Heart right ventricle (tissue), 16 donors: ENCODE measurements at regions of chr7 and their contacts with region 1.

Region 1: GRCh38 chr7:116525913-116526861 is 1.4 kb downstream of the CAV1 start:
- DNase-seq: peak; percentile 82 to 88
- ATAC-seq: peak; percentile 78 to 93 (median 87)
- H3K4me3 ChIP-seq: peak overlapping the region; percentile 61 to 96 (median 76)
- H3K27ac ChIP-seq: peak overlapping the region; percentile 90 to 99 (median 96)
- H3K4me1 ChIP-seq: peaks cover 2 to 81% (median 57%) of the 10 kb centered on the region in 9 donors
- H3K27me3 ChIP-seq: peaks cover 0 to 45% (median 0%) of the 10 kb centered on the region in 7 donors
- CTCF ChIP-seq: peak; percentile 79 to 95 (median 90)

Region 2: GRCh38 chr7:116258734-116259133 is 267.5 kb before region 1 on chr7:
- intact Hi-C with region 1: loop called in 8 of 10 experiments (anchors 1 to 5 kb)
- DNase-seq: peak in 1 of 2 donors; percentile 26
- ATAC-seq: peak in 6 of 8 donors; percentile 67 to 79 (median 72)
- H3K4me3 ChIP-seq: no peak overlapping the region
- H3K27ac ChIP-seq: peak overlapping the region in 6 of 10 donors; percentile 0 to 42 (median 28)
- H3K4me1 ChIP-seq: peaks cover 0 to 15% (median 5%) of the 10 kb centered on the region in 9 donors
- H3K27me3 ChIP-seq: no peaks in the 10 kb centered on the region
- CTCF ChIP-seq: peak; percentile 59 to 89 (median 85)

Region 3: DNA sequence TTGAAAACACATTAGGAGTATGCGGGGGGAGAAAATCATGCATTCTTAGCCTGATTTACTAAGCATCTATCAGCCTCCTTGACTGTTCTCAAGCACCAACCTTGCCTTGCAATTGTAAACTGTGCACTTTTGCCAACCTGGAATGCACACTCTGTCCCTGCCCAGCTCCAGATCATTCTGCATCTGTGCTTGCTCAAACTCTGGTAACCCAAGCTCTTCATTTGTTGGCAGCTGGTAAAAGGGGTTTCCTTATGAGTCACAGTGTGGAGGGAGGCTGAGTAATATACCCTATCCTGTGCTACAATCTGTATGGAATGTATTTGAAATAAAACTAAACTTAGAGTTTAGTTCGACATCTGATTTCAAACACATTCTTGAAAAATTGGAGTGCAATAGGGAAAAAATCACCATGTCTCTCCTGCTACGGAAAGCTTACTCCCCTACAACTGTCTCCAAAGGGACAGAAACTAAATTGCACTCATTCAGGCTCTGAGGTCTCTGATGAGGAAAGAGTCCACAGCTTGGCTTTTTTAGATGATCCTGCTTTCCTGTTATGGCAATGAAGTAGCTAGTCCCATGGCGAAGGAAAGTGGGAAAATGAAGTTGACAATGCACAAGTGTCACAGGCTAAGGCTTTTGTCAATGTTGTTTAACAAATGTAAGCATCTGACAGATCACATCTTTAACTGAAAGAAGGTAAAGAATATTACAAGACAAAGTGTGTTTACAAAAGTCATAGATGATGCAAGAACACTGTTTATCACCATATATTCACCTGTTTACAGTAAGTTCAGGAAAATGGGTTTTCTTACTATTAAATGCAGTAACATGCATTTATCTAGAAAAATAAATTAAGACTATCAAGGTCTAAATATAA is 254.0 kb before region 1 on chr7:
- intact Hi-C with region 1: loop called in 2 of 10 experiments (anchors 5 kb)
- DNase-seq: peak in 1 of 2 donors; percentile 59
- ATAC-seq: peak; percentile 83 to 99 (median 94)
- H3K4me3 ChIP-seq: no peak overlapping the region
- H3K27ac ChIP-seq: peak overlapping the region; percentile 19 to 77 (median 62)
- H3K4me1 ChIP-seq: peaks cover 9 to 43% (median 27%) of the 10 kb centered on the region in 9 donors
- H3K27me3 ChIP-seq: no peaks in the 10 kb centered on the region
- CTCF ChIP-seq: no peak

Region 4: DNA sequence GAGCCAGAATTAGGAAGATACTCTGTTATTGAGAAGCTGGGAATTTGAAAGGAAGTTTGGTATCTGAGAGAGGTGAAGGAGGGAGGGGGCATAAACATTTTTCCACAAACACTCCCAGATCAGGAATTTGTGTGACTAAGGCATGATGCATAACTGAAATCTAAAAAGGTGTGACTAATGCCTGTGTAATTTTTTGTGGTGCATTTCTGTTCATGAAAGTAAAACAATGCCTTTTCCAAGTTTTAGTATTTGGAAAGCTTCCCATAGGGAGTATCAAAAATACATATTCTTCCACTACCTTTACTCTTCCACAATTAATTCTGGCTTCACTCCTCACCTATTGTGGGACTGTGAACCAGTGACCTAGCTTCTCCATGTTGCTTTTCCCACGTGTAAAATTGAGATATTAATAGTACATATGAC is 83.1 kb before region 1 on chr7:
- intact Hi-C with region 1: loop called in 4 of 10 experiments (anchors 5 kb)
- DNase-seq: no peak
- ATAC-seq: peak in 3 of 8 donors; percentile 17 to 50 (median 19)
- H3K4me3 ChIP-seq: no peak overlapping the region
- H3K27ac ChIP-seq: peak overlapping the region in 7 of 10 donors; percentile 11 to 79 (median 50)
- H3K4me1 ChIP-seq: peaks cover 7 to 76% (median 36%) of the 10 kb centered on the region in 9 donors
- H3K27me3 ChIP-seq: no peaks in the 10 kb centered on the region
- CTCF ChIP-seq: no peak

Region 5: DNA sequence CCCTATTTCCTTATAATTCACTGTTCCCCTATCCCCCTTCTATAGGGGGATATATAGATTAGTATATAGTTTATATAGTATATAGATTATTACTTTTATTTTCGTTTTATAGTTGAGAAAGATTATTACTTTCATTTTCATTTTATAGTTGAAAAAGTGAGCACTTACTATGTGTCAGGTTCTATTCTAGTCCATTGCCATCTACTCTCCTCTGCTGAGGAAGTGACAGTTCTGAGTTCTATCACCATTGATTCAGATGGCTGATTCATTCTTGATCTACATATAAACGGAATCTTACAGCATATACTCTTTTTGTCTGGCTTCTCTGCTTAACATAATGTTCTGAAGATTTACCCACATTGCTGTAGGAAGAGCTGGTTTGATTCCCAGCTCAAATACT is 47.4 kb before region 1 on chr7:
- intact Hi-C with region 1: no loop called
- DNase-seq: no peak
- ATAC-seq: no peak
- H3K4me3 ChIP-seq: no peak overlapping the region
- H3K27ac ChIP-seq: no peak overlapping the region
- H3K4me1 ChIP-seq: no peaks in the 10 kb centered on the region
- H3K27me3 ChIP-seq: no peaks in the 10 kb centered on the region
- CTCF ChIP-seq: no peak

Region 6: GRCh38 chr7:116499168-116500077 is 26.8 kb before region 1 on chr7 and contains the start of gene CAV2:
- intact Hi-C with region 1: loop called in 4 of 10 experiments (anchors 2 kb)
- DNase-seq: peak; percentile 82 to 85
- ATAC-seq: peak; percentile 76 to 94 (median 88)
- H3K4me3 ChIP-seq: peak within 1 kb of the TSS; percentile 66 to 96 (median 84)
- H3K27ac ChIP-seq: peak within 1 kb of the TSS; percentile 92 to 100 (median 99)
- H3K4me1 ChIP-seq: peaks cover 0 to 52% (median 25%) of the 10 kb centered on the region in 9 donors
- H3K27me3 ChIP-seq: peaks cover 0 to 32% (median 0%) of the 10 kb centered on the region in 7 donors
- CTCF ChIP-seq: no peak
- total RNA-seq, gene CAV2: 196 to 277 (median 244) TPM

Region 7: DNA sequence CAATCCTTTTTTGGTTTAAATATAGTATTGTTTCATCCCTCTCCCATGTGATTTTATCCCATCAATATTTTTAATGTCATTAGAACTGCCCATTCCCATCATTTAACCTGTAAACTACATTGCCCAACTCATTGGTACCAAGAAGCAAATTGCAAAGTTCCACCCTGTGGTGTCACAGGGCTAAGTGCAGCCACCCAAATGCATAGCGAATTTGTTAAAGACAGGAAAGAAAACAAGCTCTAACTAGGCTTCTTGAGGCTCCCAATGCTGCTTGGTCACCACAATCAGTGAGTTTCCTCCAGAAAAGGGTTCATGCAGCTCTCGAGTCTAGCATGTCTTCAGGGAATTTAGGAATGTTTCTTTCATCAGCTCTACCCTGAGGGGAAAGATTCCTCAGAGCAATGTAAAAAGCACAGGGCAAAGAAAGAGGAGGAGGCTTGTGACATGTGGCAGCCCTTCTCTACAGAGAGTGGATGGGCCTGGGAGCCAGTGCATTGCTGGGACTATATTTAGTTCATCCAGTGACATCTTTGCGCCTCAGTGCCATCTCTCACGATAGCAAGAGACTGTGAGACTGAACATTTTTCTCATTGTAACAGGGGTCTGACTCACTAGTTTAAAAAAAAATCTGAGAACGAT is 56.7 kb after region 1 on chr7:
- intact Hi-C with region 1: loop called in 9 of 10 experiments (anchors 2 to 10 kb)
- DNase-seq: peak in 1 of 2 donors; percentile 70
- ATAC-seq: peak; percentile 84 to 92 (median 88)
- H3K4me3 ChIP-seq: peak overlapping the region in 4 of 10 donors; percentile 12 to 26 (median 19)
- H3K27ac ChIP-seq: peak overlapping the region in 9 of 10 donors; percentile 40 to 80 (median 69)
- H3K4me1 ChIP-seq: peaks cover 4 to 39% (median 25%) of the 10 kb centered on the region in 9 donors
- H3K27me3 ChIP-seq: no peaks in the 10 kb centered on the region
- CTCF ChIP-seq: no peak

Region 8: DNA sequence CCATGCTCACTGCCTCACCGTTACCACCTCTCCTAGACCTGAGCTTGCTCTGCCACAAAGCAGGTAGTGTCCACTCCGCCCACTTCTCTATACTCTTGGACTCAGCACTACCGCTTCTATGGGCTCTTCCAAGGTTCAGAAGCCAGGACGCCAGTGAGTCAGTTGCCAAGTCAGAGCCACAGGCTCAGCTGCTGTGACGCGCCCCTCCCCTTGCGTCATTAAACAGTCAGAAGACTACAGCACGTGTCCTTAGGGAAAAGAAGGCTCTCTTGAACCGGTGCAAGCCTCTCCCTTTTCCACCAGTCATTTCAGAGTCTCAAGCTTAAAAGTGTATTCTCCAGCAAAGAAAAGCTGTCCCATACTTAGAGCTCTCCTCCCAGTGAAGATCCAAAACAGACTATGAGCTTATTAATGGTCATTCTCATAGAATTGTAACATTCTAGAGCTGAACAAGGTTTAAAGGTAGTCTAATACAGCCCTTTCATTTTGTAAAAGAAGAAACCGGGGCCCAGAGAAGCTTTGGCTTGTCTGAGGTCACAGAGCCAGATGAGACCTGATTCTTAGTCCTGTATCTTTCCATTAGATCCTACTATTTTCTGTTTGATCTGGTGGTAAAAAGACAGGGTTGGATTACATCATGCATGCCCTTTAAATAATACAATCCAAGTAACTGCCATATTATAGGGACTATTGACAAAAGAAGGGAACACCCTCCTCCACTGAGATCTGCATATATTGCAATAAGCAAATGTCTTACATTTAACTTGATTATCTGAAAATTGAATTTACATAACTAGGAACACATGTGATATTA is 105.0 kb after region 1 on chr7:
- intact Hi-C with region 1: no loop called
- DNase-seq: peak; percentile 29 to 32
- ATAC-seq: peak; percentile 54 to 95 (median 72)
- H3K4me3 ChIP-seq: no peak overlapping the region
- H3K27ac ChIP-seq: peak overlapping the region in 2 of 10 donors; percentile 33 to 52
- H3K4me1 ChIP-seq: peaks cover 0 to 24% (median 7%) of the 10 kb centered on the region in 9 donors
- H3K27me3 ChIP-seq: no peaks in the 10 kb centered on the region
- CTCF ChIP-seq: no peak